Activated CD8-positive, alpha-beta memory T cell treated with anti-CD3 and anti-CD28 coated beads, Interleukin-2, amount 10 ng/mL, durations not matched to agents 7 days and 5 days (primary cell): ENCODE measurements at regions of chr1 and their contacts with region 1.

Region 1: GRCh38 chr1:84724128-84724860 is 34.0 kb upstream of the SSX2IP start:
- DNase-seq: no peak
- ATAC-seq: peak; percentile 39
- H3K4me3 Mint-ChIP-seq: no peak overlapping the region
- H3K27ac Mint-ChIP-seq: no peak overlapping the region
- H3K4me1 Mint-ChIP-seq: peaks cover 6% of the 10 kb centered on the region
- H3K27me3 Mint-ChIP-seq: peaks cover 8% of the 10 kb centered on the region

Region 2: DNA sequence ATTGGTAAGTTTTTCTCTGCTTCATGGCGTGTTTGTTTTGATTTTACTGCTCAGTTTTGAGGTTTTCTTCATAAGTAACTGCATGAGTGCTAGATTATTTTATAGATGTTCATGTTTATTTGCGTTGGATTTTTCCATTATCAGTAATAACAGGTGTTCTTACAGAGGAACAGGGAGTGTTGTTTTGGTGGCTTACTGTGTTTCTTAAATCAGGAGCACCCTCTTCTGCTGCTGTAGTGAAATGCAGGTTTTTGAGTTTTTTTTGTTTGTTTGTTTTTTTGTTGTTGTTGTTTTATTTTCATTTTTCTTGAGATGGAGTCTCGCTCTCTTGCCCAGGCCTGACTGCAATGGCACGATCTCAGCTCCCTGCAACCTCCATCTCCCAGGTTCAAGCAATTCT is 182.6 kb before region 1 on chr1:
- CTCF ChIA-PET with region 1: no interaction called
- DNase-seq: no peak
- ATAC-seq: no peak
- H3K4me3 Mint-ChIP-seq: no peak overlapping the region
- H3K27ac Mint-ChIP-seq: no peak overlapping the region
- H3K4me1 Mint-ChIP-seq: peaks cover 22% of the 10 kb centered on the region
- H3K27me3 Mint-ChIP-seq: no peaks in the 10 kb centered on the region

Region 3: GRCh38 chr1:84668185-84668584 is 56.1 kb before region 1 on chr1:
- CTCF ChIA-PET with region 1: no interaction called
- DNase-seq: no peak
- ATAC-seq: no peak
- H3K4me3 Mint-ChIP-seq: no peak overlapping the region
- H3K27ac Mint-ChIP-seq: no peak overlapping the region
- H3K4me1 Mint-ChIP-seq: peaks cover 8% of the 10 kb centered on the region
- H3K27me3 Mint-ChIP-seq: no peaks in the 10 kb centered on the region

Region 4: GRCh38 chr1:84687714-84688462 is 36.4 kb before region 1 on chr1:
- CTCF ChIA-PET with region 1: no interaction called
- DNase-seq: no peak
- ATAC-seq: no peak
- H3K4me3 Mint-ChIP-seq: no peak overlapping the region
- H3K27ac Mint-ChIP-seq: no peak overlapping the region
- H3K4me1 Mint-ChIP-seq: peaks cover 43% of the 10 kb centered on the region
- H3K27me3 Mint-ChIP-seq: no peaks in the 10 kb centered on the region

Region 5: GRCh38 chr1:84712276-84712874 is 11.9 kb before region 1 on chr1:
- CTCF ChIA-PET with region 1: interaction called, 11 read pairs
- DNase-seq: no peak
- ATAC-seq: no peak
- H3K4me3 Mint-ChIP-seq: no peak overlapping the region
- H3K27ac Mint-ChIP-seq: no peak overlapping the region
- H3K4me1 Mint-ChIP-seq: no peaks in the 10 kb centered on the region
- H3K27me3 Mint-ChIP-seq: peaks cover 4% of the 10 kb centered on the region